A549 (cell line): ENCODE measurements at regions of chr12 and their contacts with region 1.

Region 1: DNA sequence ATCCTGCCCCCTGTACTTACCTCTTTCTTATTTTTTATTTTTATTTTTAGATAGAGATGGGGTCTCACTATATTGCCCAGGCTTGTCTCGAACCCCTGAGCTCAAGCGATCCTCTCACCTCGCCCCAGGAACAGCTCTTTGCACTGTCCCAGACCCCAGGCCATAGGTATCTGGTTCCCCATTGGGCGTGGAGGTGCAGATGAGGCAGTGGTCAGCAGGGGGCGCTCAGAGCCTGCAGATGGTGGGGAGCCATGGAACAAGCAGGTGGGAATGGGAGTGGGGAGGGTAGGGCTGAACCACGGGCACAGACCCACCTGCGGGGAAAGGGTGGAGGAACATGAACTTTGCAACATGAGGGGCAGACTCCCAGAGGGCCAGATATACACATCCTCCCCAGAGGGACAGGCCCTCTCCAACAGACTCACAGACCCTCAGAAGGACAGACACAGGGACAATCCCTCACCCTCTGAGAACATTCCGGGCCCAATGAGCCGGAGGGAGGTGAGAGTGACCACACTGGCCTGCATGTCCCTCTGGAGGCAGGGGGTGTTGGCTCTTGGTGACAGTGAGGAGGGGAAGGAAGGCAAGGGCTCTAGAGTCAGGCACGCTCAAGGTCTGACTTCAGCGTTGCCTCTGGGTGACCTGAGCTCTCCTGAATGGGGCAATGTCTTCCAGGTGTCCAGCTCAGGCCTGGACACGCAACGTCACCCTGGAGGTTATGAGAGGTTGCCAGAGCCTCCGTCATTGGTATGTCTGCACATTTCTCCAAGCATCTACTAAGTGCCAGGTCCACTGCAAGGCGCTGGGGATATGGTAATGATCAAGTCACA is 34.9 kb downstream of the KRT80 start:
- DNase-seq: peak; percentile 81 to 88
- ATAC-seq: peak; percentile 72 to 78
- H3K4me3 ChIP-seq: no peak overlapping the region
- H3K27ac ChIP-seq: peak overlapping the region; percentile 100
- H3K4me1 ChIP-seq: peaks cover 63% of the 10 kb centered on the region
- CTCF ChIP-seq: peak; percentile 97
- EP300 ChIP-seq: no peak
- POLR2A ChIP-seq: no peak
- RAD21 ChIP-seq: peak; percentile 99 to 100

Region 2: GRCh38 chr12:51421266-51421884 is 735.6 kb before region 1 on chr12:
- CTCF ChIA-PET with region 1: no interaction called
- POLR2A ChIA-PET with region 1: no interaction called
- DNase-seq: peak; percentile 60 to 76
- ATAC-seq: peak; percentile 62 to 66
- H3K4me3 ChIP-seq: no peak overlapping the region
- H3K27ac ChIP-seq: no peak overlapping the region
- H3K4me1 ChIP-seq: peaks cover 4% of the 10 kb centered on the region
- CTCF ChIP-seq: peak; percentile 88
- EP300 ChIP-seq: no peak
- POLR2A ChIP-seq: no peak
- RAD21 ChIP-seq: peak; percentile 92 to 97

Region 3: GRCh38 chr12:52139552-52140062 is 17.3 kb before region 1 on chr12:
- CTCF ChIA-PET with region 1: interaction called, 71 read pairs
- POLR2A ChIA-PET with region 1: interaction called, 3 read pairs
- DNase-seq: peak; percentile 68 to 90
- ATAC-seq: peak; percentile 64 to 66; a peak in 5 of 6 replicates
- H3K4me3 ChIP-seq: no peak overlapping the region
- H3K27ac ChIP-seq: peak overlapping the region; percentile 100; a peak in 5 of 6 replicates
- H3K4me1 ChIP-seq: peaks cover 26% of the 10 kb centered on the region
- CTCF ChIP-seq: peak; percentile 97
- EP300 ChIP-seq: no peak
- POLR2A ChIP-seq: no peak
- RAD21 ChIP-seq: peak; percentile 92 to 97

Region 4: DNA sequence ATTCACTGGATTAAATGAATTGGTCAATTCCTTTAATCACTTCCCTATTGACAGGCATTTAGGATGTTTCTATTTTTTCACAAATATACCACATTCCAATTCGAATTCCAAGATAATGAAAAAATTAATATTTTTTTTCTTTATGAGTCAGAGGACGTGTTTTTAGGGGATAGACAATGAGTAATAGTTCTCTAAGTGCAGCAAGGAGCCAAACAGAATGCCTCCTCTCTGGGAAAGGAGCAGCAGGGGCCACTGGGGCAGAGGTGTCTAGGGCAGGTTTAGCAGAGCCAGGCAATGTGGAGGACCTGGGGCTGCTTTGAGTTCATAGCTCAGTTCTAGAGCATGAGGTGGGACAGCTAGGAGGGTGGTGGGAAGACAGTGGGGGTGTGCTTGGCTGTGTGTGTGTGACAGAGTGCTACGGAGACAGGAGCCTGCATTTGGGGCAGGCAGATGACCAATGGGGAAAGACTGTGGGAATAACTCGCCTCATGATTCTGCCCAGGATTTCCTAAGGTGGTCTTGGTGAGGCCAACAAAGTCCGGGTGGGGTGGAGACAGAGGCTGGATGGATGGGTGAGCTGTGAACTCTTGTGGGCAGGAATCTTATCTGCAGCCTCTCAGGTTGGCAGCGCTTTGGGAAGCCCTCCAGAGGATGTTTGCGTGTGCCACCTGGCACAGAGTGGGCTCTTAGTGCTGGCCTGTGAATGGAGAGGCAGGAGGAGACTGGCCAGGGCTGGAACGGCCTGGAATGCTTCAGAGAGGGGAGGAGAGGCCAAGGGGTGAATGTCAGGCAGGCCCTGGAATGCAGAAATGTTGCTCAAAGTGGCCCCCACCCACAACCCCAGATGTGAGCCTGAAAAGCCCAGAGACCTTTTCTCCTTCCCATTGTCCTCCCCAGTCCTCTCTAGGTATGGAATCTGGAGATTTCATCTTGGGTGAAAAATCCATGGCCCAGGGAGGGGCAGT is 73.7 kb after region 1 on chr12:
- CTCF ChIA-PET with region 1: interaction called, 44 read pairs
- POLR2A ChIA-PET with region 1: no interaction called
- DNase-seq: peak in 1 of 2 experiments; percentile 76
- ATAC-seq: peak; percentile 30 to 55; a peak in 3 of 6 replicates
- H3K4me3 ChIP-seq: no peak overlapping the region
- H3K27ac ChIP-seq: peak overlapping the region; percentile 97
- H3K4me1 ChIP-seq: peaks cover 48% of the 10 kb centered on the region
- CTCF ChIP-seq: no peak
- EP300 ChIP-seq: peak; percentile 67 to 71; a peak in 2 of 5 replicates
- POLR2A ChIP-seq: no peak
- RAD21 ChIP-seq: 0 out of 5 replicates have a peak, but pooled peaks of 1 of the 2 experiments have one; percentile 14

Region 5: GRCh38 chr12:52243856-52244614 is 87.1 kb after region 1 on chr12:
- CTCF ChIA-PET with region 1: interaction called, 44 read pairs
- POLR2A ChIA-PET with region 1: interaction called, 7 read pairs
- DNase-seq: peak; percentile 92 to 93
- ATAC-seq: peak; percentile 22 to 31
- H3K4me3 ChIP-seq: peak overlapping the region; percentile 24; the same call in 1 of the 3 replicates
- H3K27ac ChIP-seq: peak overlapping the region; percentile 92 to 97
- H3K4me1 ChIP-seq: peaks cover 100% of the 10 kb centered on the region
- CTCF ChIP-seq: no peak
- EP300 ChIP-seq: peak; percentile 55 to 80; a peak in 3 of 5 replicates
- POLR2A ChIP-seq: no peak
- RAD21 ChIP-seq: no peak; a peak in 2 of 5 replicates

Region 6: DNA sequence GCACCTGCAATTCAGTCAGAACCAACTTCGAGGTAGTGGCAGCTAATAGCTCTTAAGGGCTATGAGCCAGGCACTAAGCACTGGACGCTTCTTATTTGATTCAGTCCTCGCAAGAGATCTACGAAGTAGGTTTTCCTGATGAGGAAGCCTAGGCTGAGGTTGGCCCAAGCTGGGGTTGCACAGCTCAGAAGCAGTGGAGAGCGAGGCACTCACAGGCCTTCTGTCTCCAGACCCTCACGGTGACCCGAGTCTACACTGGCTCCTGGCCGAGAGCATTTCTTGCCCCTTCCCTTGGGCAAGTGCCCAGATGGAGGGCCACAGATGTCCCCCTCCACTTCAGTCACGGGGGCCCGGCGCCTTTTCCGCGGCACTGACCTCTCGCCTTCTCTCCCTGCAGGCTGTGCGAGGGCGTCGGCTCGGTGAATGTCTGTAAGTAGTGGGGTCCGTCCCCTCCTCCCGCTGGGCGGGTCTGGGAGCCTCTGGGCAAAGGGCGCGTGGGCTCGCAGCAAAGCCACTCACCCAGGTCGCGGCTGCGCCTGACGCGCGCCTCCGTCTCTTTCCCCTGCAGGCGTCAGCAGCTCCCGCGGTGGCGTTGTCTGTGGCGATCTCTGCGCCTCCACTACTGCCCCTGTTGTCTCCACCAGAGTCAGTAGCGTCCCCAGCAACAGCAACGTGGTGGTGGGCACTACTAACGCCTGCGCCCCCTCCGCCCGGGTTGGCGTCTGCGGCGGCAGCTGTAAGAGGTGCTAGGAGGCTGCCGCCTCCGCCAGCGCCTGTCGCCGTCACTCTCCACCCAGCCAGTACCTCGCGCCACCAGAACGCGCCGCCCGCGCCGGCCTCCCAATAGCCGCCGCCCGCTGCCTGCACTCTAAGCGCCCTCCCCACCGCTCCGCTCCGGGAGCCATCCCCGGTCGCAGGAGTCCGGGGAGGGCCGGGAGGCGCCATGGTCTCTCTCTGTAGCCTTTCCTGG is 151.2 kb after region 1 on chr12:
- CTCF ChIA-PET with region 1: interaction called, 14 read pairs
- POLR2A ChIA-PET with region 1: no interaction called
- DNase-seq: peak in 1 of 2 experiments; percentile 49
- ATAC-seq: peak; percentile 55 to 77
- H3K4me3 ChIP-seq: no peak overlapping the region
- H3K27ac ChIP-seq: peak overlapping the region; percentile 60 to 87
- H3K4me1 ChIP-seq: peaks cover 6% of the 10 kb centered on the region; the same call in 1 of the 3 replicates
- CTCF ChIP-seq: no peak
- EP300 ChIP-seq: no peak
- POLR2A ChIP-seq: no peak
- RAD21 ChIP-seq: no peak